ENCODE measurements at regions of chr16 and their contacts with region 1.

Region 1: DNA sequence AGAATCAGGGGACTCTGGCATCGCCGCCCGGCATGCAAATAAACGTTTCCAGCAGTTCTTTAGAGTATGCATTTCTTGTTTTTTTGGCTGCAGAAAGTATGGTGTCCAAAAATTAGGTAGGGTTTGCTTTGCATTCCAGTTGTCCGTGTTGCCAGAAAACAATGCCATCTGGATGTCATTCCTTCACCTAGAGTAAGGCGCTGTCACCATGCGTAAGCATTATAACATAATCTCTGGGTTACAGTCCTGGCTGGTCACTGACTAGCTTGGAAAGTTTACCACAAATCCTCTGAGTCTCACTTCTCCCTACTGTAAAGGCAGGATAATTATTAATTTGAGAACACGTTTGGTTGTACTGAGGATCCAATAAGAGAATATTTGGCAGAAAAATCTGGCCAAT is 457.7 kb downstream of the XYLT1 start:
- DNase-seq: no peak
- H3K4me3 Mint-ChIP-seq: peak overlapping the region; percentile 69
- H3K27ac Mint-ChIP-seq: no peak overlapping the region
- H3K4me1 Mint-ChIP-seq: peaks cover 12% of the 10 kb centered on the region
- H3K27me3 Mint-ChIP-seq: no peaks in the 10 kb centered on the region

Region 2: DNA sequence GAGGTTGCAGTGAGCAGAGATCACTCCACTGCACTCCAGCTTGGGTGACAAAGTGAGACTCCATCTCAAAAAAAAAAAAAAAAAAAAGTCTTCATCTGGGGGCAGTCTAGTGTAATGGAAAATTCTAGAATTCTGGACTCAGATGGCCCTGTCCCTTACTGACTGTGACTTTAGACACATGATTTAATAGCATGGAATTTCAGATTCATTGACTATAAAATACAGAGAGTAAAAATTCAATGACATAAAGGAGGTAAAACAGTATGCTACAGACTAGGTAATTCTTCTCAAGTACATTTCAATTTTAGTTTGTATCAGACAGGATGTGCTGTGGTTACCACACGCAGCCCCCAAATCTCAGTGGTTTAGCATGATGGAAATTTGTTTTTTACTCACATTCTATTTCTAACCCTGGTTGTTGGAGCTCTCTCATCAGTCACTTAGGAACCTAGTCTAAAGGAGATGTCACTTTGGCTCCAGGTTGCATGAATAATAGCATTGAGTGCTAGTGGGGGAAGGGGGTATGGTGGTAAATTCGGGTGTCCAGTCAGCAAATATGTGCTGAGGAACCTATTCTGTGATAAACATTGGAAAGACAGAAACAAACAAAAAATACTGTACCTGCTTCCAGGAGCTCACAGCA is 13.7 kb after region 1 on chr16:
- CTCF ChIA-PET with region 1: no interaction called
- POLR2A ChIA-PET with region 1: no interaction called
- intact Hi-C with region 1: loop called (anchors 1 kb)
- DNase-seq: peak; percentile 65
- H3K4me3 Mint-ChIP-seq: no peak overlapping the region
- H3K27ac Mint-ChIP-seq: peak overlapping the region; percentile 60
- H3K4me1 Mint-ChIP-seq: peaks cover 24% of the 10 kb centered on the region
- H3K27me3 Mint-ChIP-seq: no peaks in the 10 kb centered on the region